Caco-2 (cell line): ENCODE measurements at regions of chr17 and their contacts with region 1.

Region 1: GRCh38 chr17:50478391-50479381 is at the start of gene RSAD1:
- DNase-seq: peak; percentile 98 to 99
- H3K4me3 ChIP-seq: peak within 1 kb of the TSS; percentile 70
- H3K4me3 Mint-ChIP-seq: peak within 1 kb of the TSS; percentile 78
- H3K27ac Mint-ChIP-seq: peak within 1 kb of the TSS; percentile 90
- H3K4me1 ChIP-seq: peaks cover 22% of the 10 kb centered on the region
- H3K4me1 Mint-ChIP-seq: peaks cover 50% of the 10 kb centered on the region
- H3K27me3 ChIP-seq: no peaks in the 10 kb centered on the region
- H3K27me3 Mint-ChIP-seq: no peaks in the 10 kb centered on the region
- CTCF ChIP-seq: peak; percentile 80 to 99
- total RNA-seq, gene RSAD1: 85.3 and 93.9 TPM in 2 replicates

Region 2: GRCh38 chr17:50297407-50297865 is 181.2 kb before region 1 on chr17:
- CTCF ChIA-PET with region 1: no interaction called
- POLR2A ChIA-PET with region 1: no interaction called
- intact Hi-C with region 1: loop called (anchors 2 kb)
- DNase-seq: peak; percentile 95 to 98
- H3K4me3 ChIP-seq: no peak overlapping the region
- H3K4me3 Mint-ChIP-seq: no peak overlapping the region
- H3K27ac Mint-ChIP-seq: peak overlapping the region; percentile 13
- H3K4me1 ChIP-seq: peaks cover 5% of the 10 kb centered on the region; the same call in 1 of the 2 replicates
- H3K4me1 Mint-ChIP-seq: peaks cover 10% of the 10 kb centered on the region
- H3K27me3 ChIP-seq: no peaks in the 10 kb centered on the region
- H3K27me3 Mint-ChIP-seq: no peaks in the 10 kb centered on the region
- CTCF ChIP-seq: peak; percentile 100

Region 3: GRCh38 chr17:50431233-50431632 is 47.5 kb before region 1 on chr17:
- CTCF ChIA-PET with region 1: interaction called, 13 read pairs
- POLR2A ChIA-PET with region 1: no interaction called
- intact Hi-C with region 1: loop called (anchors 1 kb)
- DNase-seq: peak; percentile 66 to 71
- H3K4me3 ChIP-seq: no peak overlapping the region
- H3K4me3 Mint-ChIP-seq: no peak overlapping the region
- H3K27ac Mint-ChIP-seq: peak overlapping the region; percentile 0
- H3K4me1 ChIP-seq: peaks cover 49% of the 10 kb centered on the region
- H3K4me1 Mint-ChIP-seq: peaks cover 32% of the 10 kb centered on the region
- H3K27me3 ChIP-seq: no peaks in the 10 kb centered on the region
- H3K27me3 Mint-ChIP-seq: no peaks in the 10 kb centered on the region
- CTCF ChIP-seq: no peak

Region 4: DNA sequence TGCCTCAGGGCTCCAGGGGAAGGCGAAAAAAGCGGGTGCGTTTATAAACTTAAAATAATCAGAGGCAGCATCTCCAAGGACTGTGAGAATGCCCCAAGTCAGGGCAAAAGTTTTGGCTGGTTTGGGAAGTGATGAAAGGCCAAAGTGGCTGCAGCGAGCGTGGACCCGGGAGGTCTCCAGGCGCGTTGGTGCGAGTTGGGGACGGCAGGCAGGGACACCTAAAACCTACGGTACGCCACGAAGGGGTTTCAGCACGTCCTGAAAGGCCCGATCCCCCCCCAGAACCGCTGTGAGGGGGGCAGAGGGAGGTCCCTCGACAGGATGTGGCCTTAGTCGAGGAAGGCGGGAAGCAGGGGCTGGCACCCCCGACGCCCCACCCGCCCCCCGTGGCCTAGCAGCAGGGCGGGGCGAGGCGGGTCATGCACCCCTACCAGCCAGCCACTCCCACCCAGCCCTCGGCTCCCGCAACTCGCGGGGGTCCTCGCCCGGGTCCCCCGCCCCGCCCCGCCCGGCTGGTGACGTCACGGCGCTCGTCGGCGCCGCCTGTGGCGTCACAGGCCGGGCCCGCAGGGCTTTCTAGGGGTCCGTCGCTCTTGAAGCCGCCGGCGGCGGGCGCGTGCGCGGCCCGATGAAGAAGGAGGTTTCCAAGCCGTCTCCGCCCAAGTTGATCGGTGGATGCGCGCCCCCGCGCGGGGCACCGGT is 29.3 kb after region 1 on chr17 and contains the start of gene MYCBPAP:
- CTCF ChIA-PET with region 1: interaction called, 20 read pairs
- POLR2A ChIA-PET with region 1: no interaction called
- intact Hi-C with region 1: loop called (anchors 2 kb)
- DNase-seq: peak; percentile 90 to 92
- H3K4me3 ChIP-seq: peak within 1 kb of the TSS; percentile 36
- H3K4me3 Mint-ChIP-seq: peak within 1 kb of the TSS; percentile 67
- H3K27ac Mint-ChIP-seq: peak within 1 kb of the TSS; percentile 58
- H3K4me1 ChIP-seq: peaks cover 16% of the 10 kb centered on the region
- H3K4me1 Mint-ChIP-seq: peaks cover 15% of the 10 kb centered on the region
- H3K27me3 ChIP-seq: no peaks in the 10 kb centered on the region
- H3K27me3 Mint-ChIP-seq: no peaks in the 10 kb centered on the region
- CTCF ChIP-seq: peak; percentile 35 to 53
- total RNA-seq, gene MYCBPAP: 1.3 and 2.7 TPM in 2 replicates

Region 5: GRCh38 chr17:50560185-50560824 is 81.6 kb after region 1 on chr17 and contains the start of gene CACNA1G:
- CTCF ChIA-PET with region 1: interaction called, 14 read pairs
- POLR2A ChIA-PET with region 1: interaction called, 3 read pairs
- intact Hi-C with region 1: no loop called
- DNase-seq: peak; percentile 97 to 100
- H3K4me3 ChIP-seq: peak within 1 kb of the TSS; percentile 41
- H3K4me3 Mint-ChIP-seq: peak within 1 kb of the TSS; percentile 87
- H3K27ac Mint-ChIP-seq: peak within 1 kb of the TSS; percentile 52
- H3K4me1 ChIP-seq: peaks cover 16% of the 10 kb centered on the region
- H3K4me1 Mint-ChIP-seq: peaks cover 7% of the 10 kb centered on the region
- H3K27me3 ChIP-seq: peaks cover 12% of the 10 kb centered on the region
- H3K27me3 Mint-ChIP-seq: peaks cover 16% of the 10 kb centered on the region
- CTCF ChIP-seq: no peak
- total RNA-seq, gene CACNA1G: 1.4 and 1.6 TPM in 2 replicates

Region 6: DNA sequence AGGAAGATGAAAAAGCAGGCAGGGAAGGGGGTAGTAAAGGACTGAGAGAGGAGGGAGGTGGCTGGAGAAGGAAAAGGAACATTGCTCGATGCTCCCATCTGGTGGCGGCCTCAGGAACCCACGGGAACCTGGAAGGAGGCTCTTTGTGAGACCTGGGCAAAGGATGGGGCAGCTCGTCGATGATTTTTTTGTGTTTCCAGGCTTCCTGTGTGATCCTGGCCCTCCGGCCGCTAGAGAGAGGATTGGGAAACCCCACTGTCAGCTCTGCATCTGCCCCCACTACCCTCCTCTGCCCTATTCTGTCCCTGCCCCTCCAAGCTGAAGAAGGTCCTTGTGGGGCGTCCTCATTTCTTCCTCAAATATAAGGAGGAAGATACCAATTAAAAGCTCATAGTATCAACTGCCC is 363.3 kb after region 1 on chr17:
- CTCF ChIA-PET with region 1: no interaction called
- POLR2A ChIA-PET with region 1: no interaction called
- intact Hi-C with region 1: loop called (anchors 1 kb)
- DNase-seq: peak; percentile 89 to 94
- H3K4me3 ChIP-seq: no peak overlapping the region
- H3K4me3 Mint-ChIP-seq: no peak overlapping the region
- H3K27ac Mint-ChIP-seq: no peak overlapping the region
- H3K4me1 ChIP-seq: peaks cover 23% of the 10 kb centered on the region
- H3K4me1 Mint-ChIP-seq: peaks cover 10% of the 10 kb centered on the region
- H3K27me3 ChIP-seq: no peaks in the 10 kb centered on the region
- H3K27me3 Mint-ChIP-seq: no peaks in the 10 kb centered on the region
- CTCF ChIP-seq: peak; percentile 98 to 99